ENCODE measurements at regions of chr22 and their contacts with region 1.

Region 1: DNA sequence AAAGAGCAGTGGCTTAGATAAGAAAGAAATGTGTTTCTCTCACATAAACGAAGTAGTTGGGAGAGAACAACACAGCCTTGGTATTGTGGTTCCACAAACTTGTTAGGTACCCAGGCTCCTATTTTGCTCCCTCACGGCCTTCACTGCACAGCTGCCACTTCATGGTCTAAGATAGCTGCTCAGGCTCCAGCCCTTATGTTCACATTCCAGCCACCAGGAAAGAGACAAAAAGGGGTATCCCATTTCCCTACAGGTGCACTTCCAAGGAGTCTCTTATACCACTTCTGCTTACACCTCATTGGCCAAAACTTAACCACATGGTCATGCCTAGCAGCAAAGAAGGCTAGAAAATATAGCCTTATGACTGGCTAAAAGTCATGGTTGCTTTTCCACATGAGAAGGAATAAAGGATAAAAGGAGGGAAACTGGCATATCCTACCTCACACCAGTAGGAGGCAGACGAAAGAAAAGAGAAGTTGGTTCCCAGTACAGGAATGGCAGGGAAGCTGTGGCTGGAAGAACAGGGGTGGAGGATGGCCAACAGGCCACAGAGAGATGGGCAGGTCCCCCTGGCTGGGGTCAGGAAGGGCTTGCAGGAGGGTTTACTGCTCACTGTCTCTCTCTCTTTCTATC is 5.4 kb upstream of the HDHD5 start:
- DNase-seq: no peak
- H3K4me3 ChIP-seq: no peak overlapping the region
- H3K27ac ChIP-seq: no peak overlapping the region
- H3K4me1 ChIP-seq: peaks cover 6 to 7% of the 10 kb centered on the region in 2 donors
- H3K27me3 ChIP-seq: no peaks in the 10 kb centered on the region
- CTCF ChIP-seq: no peak
- POLR2A ChIP-seq: no peak

Region 2: DNA sequence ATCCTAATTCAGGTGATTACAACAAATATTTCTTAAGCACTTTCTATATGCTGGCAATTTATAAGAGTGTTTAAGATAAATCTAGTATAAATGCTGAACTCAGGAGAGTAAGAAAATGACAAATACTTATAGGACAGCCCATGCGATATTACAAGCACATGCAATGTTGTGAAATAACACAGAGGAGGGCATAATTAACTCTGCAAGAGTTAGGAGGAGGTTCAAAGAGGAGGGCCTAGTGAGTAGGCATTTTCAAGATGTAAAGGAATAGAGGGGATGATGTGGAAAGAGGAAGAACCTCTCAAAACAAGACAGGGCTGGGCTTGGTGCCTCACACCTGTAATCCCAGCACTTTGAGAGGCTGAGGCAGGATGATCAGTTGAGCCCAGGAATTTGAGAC is 116.9 kb before region 1 on chr22:
- intact Hi-C with region 1: no loop called
- DNase-seq: no peak
- H3K4me3 ChIP-seq: no peak overlapping the region
- H3K27ac ChIP-seq: no peak overlapping the region
- H3K4me1 ChIP-seq: no peaks in the 10 kb centered on the region
- H3K27me3 ChIP-seq: no peaks in the 10 kb centered on the region
- CTCF ChIP-seq: no peak
- POLR2A ChIP-seq: no peak

Region 3: GRCh38 chr22:17077255-17077654 is 87.3 kb before region 1 on chr22:
- intact Hi-C with region 1: loop called (anchors 5 kb)
- DNase-seq: no peak
- H3K4me3 ChIP-seq: no peak overlapping the region
- H3K27ac ChIP-seq: no peak overlapping the region
- H3K4me1 ChIP-seq: no peaks in the 10 kb centered on the region
- H3K27me3 ChIP-seq: no peaks in the 10 kb centered on the region
- CTCF ChIP-seq: no peak
- POLR2A ChIP-seq: no peak